ENCODE measurements at regions of chr17 and their contacts with region 1.

Region 1: GRCh38 chr17:77542551-77543490 is 402.1 kb downstream of the SEC14L1 start:
- DNase-seq: peak; percentile 78
- H3K4me3 Mint-ChIP-seq: no peak overlapping the region
- H3K27ac Mint-ChIP-seq: no peak overlapping the region
- H3K4me1 Mint-ChIP-seq: no peaks in the 10 kb centered on the region
- H3K27me3 Mint-ChIP-seq: peaks cover 38% of the 10 kb centered on the region
- CTCF ChIP-seq: peak; percentile 93

Region 2: DNA sequence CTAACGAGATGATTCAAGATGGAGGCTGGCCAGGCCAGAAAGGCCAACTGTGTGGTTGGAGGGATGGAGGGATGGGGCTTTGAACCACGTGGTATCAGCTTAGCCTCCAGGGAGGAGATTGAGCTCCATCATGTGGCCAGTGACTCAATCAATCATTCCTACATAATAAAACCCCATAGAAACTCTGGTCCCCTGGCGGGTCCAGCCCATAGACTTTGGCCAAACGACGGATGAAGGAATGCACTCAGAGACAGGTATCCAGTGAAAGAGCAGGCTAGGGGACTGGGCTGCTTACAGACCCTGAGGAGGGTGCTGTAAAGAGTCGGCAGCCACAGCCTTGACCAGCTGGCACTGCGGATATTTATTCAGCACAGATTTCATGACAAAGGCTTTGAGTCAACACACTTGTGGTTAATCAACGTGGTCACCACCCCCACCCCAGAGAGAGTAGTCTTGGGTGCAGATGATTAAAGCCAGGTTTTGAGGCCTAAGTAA is 106.9 kb after region 1 on chr17:
- CTCF ChIA-PET with region 1: interaction called, 8 read pairs
- POLR2A ChIA-PET with region 1: no interaction called
- intact Hi-C with region 1: loop called (anchors 1 kb)
- DNase-seq: peak; percentile 38
- H3K4me3 Mint-ChIP-seq: no peak overlapping the region
- H3K27ac Mint-ChIP-seq: no peak overlapping the region
- H3K4me1 Mint-ChIP-seq: no peaks in the 10 kb centered on the region
- H3K27me3 Mint-ChIP-seq: peaks cover 20% of the 10 kb centered on the region
- CTCF ChIP-seq: no peak

Region 3: GRCh38 chr17:77772461-77772897 is 229.7 kb after region 1 on chr17:
- CTCF ChIA-PET with region 1: no interaction called
- POLR2A ChIA-PET with region 1: no interaction called
- intact Hi-C with region 1: loop called (anchors 5 kb)
- DNase-seq: peak; percentile 55
- H3K4me3 Mint-ChIP-seq: no peak overlapping the region
- H3K27ac Mint-ChIP-seq: no peak overlapping the region
- H3K4me1 Mint-ChIP-seq: peaks cover 5% of the 10 kb centered on the region
- H3K27me3 Mint-ChIP-seq: peaks cover 16% of the 10 kb centered on the region
- CTCF ChIP-seq: peak; percentile 67

Region 4: DNA sequence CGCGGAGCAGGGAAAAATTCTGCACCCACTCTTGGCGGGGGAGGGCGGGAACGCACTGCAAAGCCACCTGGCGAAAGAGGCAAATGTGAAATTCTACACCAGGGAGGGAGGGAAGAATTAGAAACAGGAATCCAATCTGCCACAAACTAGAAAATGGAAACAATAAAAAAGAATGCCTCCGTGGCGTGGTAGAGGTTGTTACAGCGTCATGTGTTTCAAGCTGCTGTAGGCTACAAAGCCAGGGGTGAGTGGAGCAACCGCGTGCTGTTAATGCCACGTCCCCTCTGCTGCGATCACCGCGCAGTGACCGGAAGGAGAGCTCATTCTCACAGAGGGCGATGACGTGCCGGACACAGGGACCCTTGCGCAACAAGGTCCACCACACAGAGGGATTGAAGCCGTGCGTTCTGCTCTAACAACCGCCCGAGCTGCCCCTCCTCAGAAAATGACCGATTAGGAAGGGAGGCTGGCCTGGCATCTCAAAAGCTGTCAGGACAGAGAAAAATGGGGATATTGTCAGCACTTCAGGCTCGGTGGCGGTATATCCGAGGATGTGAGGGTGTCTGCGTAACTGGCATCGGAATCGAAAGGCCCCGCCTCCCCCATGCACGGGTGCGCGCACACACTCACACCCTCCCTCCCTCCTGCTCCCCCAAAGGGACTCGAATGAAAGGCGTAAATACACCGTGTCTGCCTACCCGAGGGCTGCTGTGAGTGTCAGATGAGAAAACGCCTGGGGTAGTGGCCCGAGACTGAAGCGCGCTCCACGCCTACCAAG is 344.8 kb after region 1 on chr17:
- CTCF ChIA-PET with region 1: no interaction called
- POLR2A ChIA-PET with region 1: no interaction called
- intact Hi-C with region 1: loop called (anchors 5 kb)
- DNase-seq: peak; percentile 59
- H3K4me3 Mint-ChIP-seq: peak overlapping the region; percentile 69
- H3K27ac Mint-ChIP-seq: no peak overlapping the region
- H3K4me1 Mint-ChIP-seq: peaks cover 24% of the 10 kb centered on the region
- H3K27me3 Mint-ChIP-seq: peaks cover 34% of the 10 kb centered on the region
- CTCF ChIP-seq: no peak